ENCODE measurements at regions of chr1 and their contacts with region 1.

Region 1: GRCh38 chr1:33472349-33472980 is at the start of gene ZSCAN20:
- DNase-seq: peak; percentile 95
- ATAC-seq: peak; percentile 89
- H3K4me3 ChIP-seq: peak within 1 kb of the TSS; percentile 83 to 93
- H3K27ac ChIP-seq: peak within 1 kb of the TSS; percentile 40
- H3K4me1 ChIP-seq: peaks cover 6 to 42% of the 10 kb centered on the region in 2 experiments; a peak in 3 of 4 replicates
- H3K27me3 ChIP-seq: no peaks in the 10 kb centered on the region
- CTCF ChIP-seq: no peak
- POLR2A ChIP-seq: no peak
- RAD21 ChIP-seq: no peak
- total RNA-seq, gene ZSCAN20: 9.0 TPM

Region 2: GRCh38 chr1:33094971-33095604 is 377.4 kb before region 1 on chr1:
- CTCF ChIA-PET with region 1: no interaction called
- POLR2A ChIA-PET with region 1: no interaction called
- RAD21 ChIA-PET with region 1: no interaction called
- intact Hi-C with region 1: loop called (anchors 5 kb)
- DNase-seq: peak; percentile 60
- ATAC-seq: no peak
- H3K4me3 ChIP-seq: no peak overlapping the region
- H3K27ac ChIP-seq: no peak overlapping the region
- H3K4me1 ChIP-seq: peaks cover 17 to 38% of the 10 kb centered on the region in 2 experiments
- H3K27me3 ChIP-seq: no peaks in the 10 kb centered on the region
- CTCF ChIP-seq: peak; percentile 92 to 99 (median 97)
- POLR2A ChIP-seq: no peak
- RAD21 ChIP-seq: peak; percentile 74

Region 3: DNA sequence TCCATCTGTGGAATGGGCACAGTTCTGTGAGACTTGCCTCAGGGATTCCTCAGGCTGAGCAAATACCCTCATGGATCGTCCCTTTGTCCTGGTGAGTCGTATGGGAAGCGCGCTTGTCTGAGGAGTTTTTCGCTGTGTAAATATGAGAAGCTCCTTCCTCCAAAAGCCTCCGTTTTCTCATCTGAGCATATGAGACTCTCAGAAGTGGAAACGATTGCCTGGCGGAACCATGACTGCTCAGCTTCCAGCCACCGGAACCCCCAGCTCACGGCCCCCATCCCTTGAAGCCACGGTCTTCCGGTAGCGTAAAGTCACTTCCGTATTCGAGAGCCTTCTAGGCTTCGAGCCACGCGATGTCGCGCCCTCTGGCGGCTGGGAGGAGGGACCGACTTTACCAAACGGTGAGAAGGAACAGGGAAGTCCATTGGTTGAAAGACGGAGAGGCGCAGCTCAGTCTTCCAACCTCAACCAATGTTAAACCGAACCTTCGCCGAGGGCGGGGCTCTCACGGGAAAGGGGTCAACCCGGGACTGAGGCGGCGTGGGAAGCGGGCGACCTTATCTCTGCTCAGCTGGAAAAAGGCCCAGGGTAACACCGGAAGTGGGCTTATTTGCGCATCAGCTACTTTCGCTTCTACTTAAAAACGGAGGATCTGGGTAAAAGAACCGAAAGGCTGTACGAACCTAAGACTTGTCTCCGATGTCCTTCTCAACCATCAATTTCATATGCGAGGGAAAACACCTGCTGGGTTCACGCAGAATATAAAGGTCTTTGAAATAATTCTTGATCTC is 345.3 kb before region 1 on chr1:
- CTCF ChIA-PET with region 1: interaction called, 9 read pairs
- POLR2A ChIA-PET with region 1: interaction called, 3 read pairs
- RAD21 ChIA-PET with region 1: no interaction called
- intact Hi-C with region 1: loop called (anchors 5 kb)
- DNase-seq: peak; percentile 99
- ATAC-seq: peak; percentile 96
- H3K4me3 ChIP-seq: peak overlapping the region; percentile 78 to 98
- H3K27ac ChIP-seq: peak overlapping the region; percentile 66
- H3K4me1 ChIP-seq: peaks cover 5 to 20% of the 10 kb centered on the region in 2 experiments; a peak in 3 of 4 replicates
- H3K27me3 ChIP-seq: no peaks in the 10 kb centered on the region
- CTCF ChIP-seq: peak; percentile 80 to 94 (median 91)
- POLR2A ChIP-seq: peak; percentile 74
- RAD21 ChIP-seq: peak; percentile 41

Region 4: DNA sequence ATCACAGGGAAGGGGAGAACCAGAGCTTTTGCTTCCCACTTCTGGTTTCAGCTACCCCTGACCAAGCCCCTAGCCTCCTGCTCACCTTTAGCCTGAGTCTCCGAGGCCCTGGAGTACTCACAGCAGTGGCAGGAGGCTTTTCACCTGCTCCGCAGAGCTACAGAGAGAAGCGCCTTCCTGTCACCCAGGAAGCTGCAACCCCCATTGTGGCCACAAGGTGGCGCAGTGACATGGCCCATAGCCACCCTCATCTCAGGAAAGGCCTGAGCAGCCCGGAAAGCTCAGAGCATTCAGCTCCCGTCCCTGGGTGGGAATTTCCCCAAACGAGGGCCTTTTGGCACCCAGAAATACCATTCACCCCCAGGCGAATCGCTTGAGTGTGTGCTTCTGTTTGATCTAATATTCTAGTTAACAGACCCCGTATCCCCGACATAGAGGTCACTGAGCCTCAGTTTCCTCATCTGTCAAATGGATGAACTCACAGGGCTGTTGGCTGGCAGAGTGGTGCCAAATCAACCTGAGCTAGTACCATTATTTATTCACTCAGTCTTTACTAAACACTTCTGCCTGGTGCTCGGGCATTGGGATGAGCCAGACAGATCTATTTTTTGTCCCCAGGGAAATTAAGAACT is 176.9 kb before region 1 on chr1:
- CTCF ChIA-PET with region 1: interaction called, 37 read pairs
- POLR2A ChIA-PET with region 1: interaction called, 7 read pairs
- RAD21 ChIA-PET with region 1: interaction called, 5 to 15 read pairs
- intact Hi-C with region 1: loop called (anchors 1 kb)
- DNase-seq: peak; percentile 47
- ATAC-seq: peak; percentile 86
- H3K4me3 ChIP-seq: no peak overlapping the region
- H3K27ac ChIP-seq: no peak overlapping the region
- H3K4me1 ChIP-seq: peaks cover 0 to 8% of the 10 kb centered on the region in 2 experiments; a peak in 2 of 4 replicates
- H3K27me3 ChIP-seq: no peaks in the 10 kb centered on the region
- CTCF ChIP-seq: peak; percentile 89 to 97 (median 95)
- POLR2A ChIP-seq: no peak
- RAD21 ChIP-seq: peak; percentile 90

Region 5: GRCh38 chr1:33384040-33384812 is 88.2 kb before region 1 on chr1:
- CTCF ChIA-PET with region 1: interaction called, 3 read pairs
- POLR2A ChIA-PET with region 1: no interaction called
- RAD21 ChIA-PET with region 1: no interaction called
- intact Hi-C with region 1: loop called (anchors 5 kb)
- DNase-seq: no peak
- ATAC-seq: peak; percentile 53
- H3K4me3 ChIP-seq: no peak overlapping the region
- H3K27ac ChIP-seq: 0 out of 2 replicates have a peak overlapping the region, but pooled peaks have one; percentile 9
- H3K4me1 ChIP-seq: peaks cover 14 to 73% of the 10 kb centered on the region in 2 experiments
- H3K27me3 ChIP-seq: no peaks in the 10 kb centered on the region
- CTCF ChIP-seq: no peak
- POLR2A ChIP-seq: no peak
- RAD21 ChIP-seq: no peak

Region 6: DNA sequence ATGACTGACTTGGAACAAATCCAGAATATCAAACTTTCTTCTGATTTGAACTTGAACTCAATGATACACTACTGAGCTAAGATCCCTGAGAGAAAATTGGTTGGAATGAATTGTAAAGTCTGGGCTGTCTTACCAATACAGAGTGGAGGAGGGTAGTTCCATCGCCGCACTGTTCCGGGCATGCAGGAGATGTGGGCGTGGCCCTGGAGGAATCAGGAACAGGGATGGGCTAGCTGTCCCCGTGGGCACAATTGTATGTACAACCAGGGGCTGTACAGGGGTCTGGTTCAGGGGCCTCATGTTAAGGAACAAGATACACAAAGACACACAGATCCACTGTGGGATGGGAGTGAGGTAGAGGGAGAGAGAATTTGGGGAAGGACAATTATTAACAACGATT is 144.3 kb after region 1 on chr1:
- CTCF ChIA-PET with region 1: interaction called, 23 read pairs
- POLR2A ChIA-PET with region 1: no interaction called
- RAD21 ChIA-PET with region 1: interaction called, 3 to 5 read pairs
- intact Hi-C with region 1: loop called (anchors 2 kb)
- DNase-seq: no peak
- ATAC-seq: no peak
- H3K4me3 ChIP-seq: no peak overlapping the region
- H3K27ac ChIP-seq: no peak overlapping the region
- H3K4me1 ChIP-seq: peaks cover 0 to 5% of the 10 kb centered on the region in 2 experiments; a peak in 1 of 4 replicates
- H3K27me3 ChIP-seq: peaks cover 4% of the 10 kb centered on the region; the same call in 1 of the 2 replicates
- CTCF ChIP-seq: no peak
- POLR2A ChIP-seq: no peak
- RAD21 ChIP-seq: no peak

Region 7: GRCh38 chr1:33903210-33903589 is 430.7 kb after region 1 on chr1:
- CTCF ChIA-PET with region 1: no interaction called
- POLR2A ChIA-PET with region 1: no interaction called
- RAD21 ChIA-PET with region 1: no interaction called
- intact Hi-C with region 1: no loop called
- DNase-seq: no peak
- ATAC-seq: no peak
- H3K4me3 ChIP-seq: no peak overlapping the region
- H3K27ac ChIP-seq: no peak overlapping the region
- H3K4me1 ChIP-seq: no peaks in the 10 kb centered on the region
- H3K27me3 ChIP-seq: peaks cover 30% of the 10 kb centered on the region
- CTCF ChIP-seq: no peak
- POLR2A ChIP-seq: no peak
- RAD21 ChIP-seq: no peak